Sciatic nerve (tissue), 2 donors: ENCODE measurements at regions of chr10 and their contacts with region 1.

Region 1: GRCh38 chr10:111186358-111186757 is 109.5 kb downstream of the ADRA2A start:
- DNase-seq: no peak
- ATAC-seq: no peak

Region 2: DNA sequence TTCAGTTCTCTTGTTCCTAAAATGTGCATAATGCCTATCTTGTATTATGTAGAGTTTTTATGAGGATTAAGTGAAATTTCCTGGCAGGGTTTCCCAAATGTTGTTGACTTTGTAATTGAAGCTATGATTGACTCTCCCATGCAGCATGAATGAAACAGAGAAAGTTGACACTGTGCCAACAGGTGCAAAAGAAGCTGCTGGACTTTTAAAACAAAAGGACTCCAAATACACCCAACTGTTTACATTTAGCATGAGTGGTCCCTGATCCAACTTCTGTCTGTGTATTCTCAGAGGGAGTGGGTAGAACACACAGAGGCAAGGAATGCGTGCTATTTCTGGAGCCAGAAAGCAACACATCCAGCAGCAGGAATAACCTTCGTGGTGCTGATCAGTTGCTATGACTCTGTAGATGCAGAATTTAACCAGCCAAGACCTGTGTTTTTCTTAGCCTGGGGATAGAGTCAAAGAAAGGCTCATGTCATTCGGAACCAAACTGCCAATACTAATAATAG is 556.6 kb before region 1 on chr10:
- intact Hi-C with region 1: no loop called
- DNase-seq: no peak
- ATAC-seq: peak; percentile 52

Region 3: DNA sequence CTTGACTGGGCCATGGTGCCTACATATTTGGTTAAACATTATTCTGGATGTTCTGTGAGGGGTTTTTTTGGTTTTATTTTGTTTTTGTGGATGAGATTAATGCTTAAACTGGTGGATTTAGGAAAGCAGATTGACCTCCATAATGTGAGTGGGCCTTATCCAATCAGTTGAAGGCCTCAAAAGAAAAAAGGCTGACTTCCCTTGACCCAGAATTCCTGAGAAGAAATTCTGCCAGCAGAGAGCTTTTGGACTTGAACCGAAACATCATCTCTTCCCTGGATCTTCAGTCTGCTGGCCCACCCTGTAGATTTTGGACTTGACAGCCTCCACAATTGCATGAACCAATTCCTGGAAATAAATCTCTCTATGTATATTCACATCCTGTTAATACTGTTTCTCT is 15.2 kb before region 1 on chr10:
- intact Hi-C with region 1: loop called (anchors 1 kb)
- DNase-seq: no peak
- ATAC-seq: no peak

Region 4: GRCh38 chr10:111303887-111304286 is 117.5 kb after region 1 on chr10:
- intact Hi-C with region 1: no loop called
- DNase-seq: no peak
- ATAC-seq: no peak